ENCODE measurements at regions of chr3 and their contacts with region 1.

Region 1: DNA sequence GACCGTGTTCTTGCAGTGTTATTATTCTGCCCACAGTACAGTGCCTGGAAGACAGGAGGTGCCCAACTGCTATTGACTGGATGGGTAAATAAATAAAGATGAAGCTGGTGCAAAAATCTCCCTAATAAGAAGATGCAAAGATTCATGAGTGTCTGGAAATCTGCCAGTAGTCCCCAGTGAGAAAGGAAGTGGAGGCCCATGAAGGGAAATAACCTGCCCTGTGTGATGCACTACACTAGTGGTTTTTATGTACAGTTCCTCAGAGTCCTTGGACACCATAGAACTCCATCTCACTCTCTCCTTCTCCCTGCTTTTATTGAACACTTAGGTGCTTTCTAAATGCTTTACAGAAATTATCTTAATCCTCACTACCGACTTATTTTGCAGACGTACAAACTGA is 8.3 kb upstream of the SUCLG2 start:
- DNase-seq: no peak
- ATAC-seq: no peak
- H3K4me3 ChIP-seq: no peak overlapping the region
- H3K27ac ChIP-seq: no peak overlapping the region
- H3K4me1 ChIP-seq: no peaks in the 10 kb centered on the region
- H3K27me3 ChIP-seq: no peaks in the 10 kb centered on the region
- CTCF ChIP-seq: no peak

Region 2: GRCh38 chr3:69009559-69010410 is 1347.1 kb after region 1 on chr3:
- CTCF ChIA-PET with region 1: no interaction called
- POLR2A ChIA-PET with region 1: interaction called, 12 read pairs
- in situ Hi-C with region 1: no loop called
- intact Hi-C with region 1: no loop called
- DNase-seq: no peak
- ATAC-seq: no peak
- H3K4me3 ChIP-seq: no peak overlapping the region
- H3K27ac ChIP-seq: no peak overlapping the region
- H3K4me1 ChIP-seq: peaks cover 4% of the 10 kb centered on the region; the same call in 1 of the 2 replicates
- H3K27me3 ChIP-seq: no peaks in the 10 kb centered on the region
- CTCF ChIP-seq: no peak

Measured in Panc1 (cell line).